A549 (cell line): ENCODE measurements at regions of chr12 and their contacts with region 1.

Region 1: DNA sequence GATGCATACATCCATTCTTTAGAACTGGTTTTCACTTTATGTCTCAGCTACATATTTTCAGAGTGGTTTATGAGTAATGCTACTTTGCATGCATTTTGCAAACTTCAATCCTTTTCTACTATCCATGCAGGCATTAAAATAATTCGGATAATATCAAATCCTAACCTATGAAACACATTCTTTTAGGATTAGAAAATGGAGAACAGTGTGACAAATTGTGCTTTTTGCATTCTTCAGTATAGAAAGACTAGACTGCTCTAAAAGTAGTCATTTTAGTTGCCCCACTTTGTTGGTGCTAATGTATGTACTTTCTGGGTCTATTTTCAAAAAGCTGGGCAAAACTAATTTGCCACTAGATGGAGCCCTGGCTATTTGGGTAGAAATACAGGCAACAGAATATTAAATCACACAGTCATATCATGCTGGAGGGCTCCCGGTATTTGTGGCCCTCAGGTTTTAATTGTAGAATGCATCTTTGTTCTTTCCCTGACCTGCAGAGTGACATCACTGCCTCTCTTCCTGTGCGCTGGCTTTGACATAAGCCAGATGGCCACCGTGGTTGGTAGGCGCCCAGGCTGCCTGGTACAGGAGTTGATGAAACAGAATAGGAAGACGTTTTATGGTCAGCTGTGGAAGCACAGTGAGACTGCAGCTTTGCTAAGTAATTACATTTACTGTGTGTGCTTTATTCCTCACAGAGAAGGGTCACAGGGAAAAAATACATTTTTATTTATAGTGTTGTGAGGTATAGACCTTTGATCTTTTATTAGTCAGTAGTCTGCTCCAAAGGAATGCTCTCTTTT is 28.1 kb downstream of the MSRB3 start:
- DNase-seq: peak; percentile 25 to 49
- ATAC-seq: peak; percentile 75 to 80; a peak in 5 of 6 replicates
- H3K4me3 ChIP-seq: no peak overlapping the region
- H3K27ac ChIP-seq: no peak overlapping the region
- H3K4me1 ChIP-seq: peaks cover 7% of the 10 kb centered on the region
- CTCF ChIP-seq: peak; percentile 84
- EP300 ChIP-seq: no peak
- POLR2A ChIP-seq: no peak
- RAD21 ChIP-seq: peak; percentile 77 to 83

Region 2: GRCh38 chr12:65327207-65328076 is 20.9 kb after region 1 on chr12:
- CTCF ChIA-PET with region 1: interaction called, 13 read pairs
- POLR2A ChIA-PET with region 1: no interaction called
- DNase-seq: no peak
- ATAC-seq: no peak
- H3K4me3 ChIP-seq: no peak overlapping the region
- H3K27ac ChIP-seq: no peak overlapping the region
- H3K4me1 ChIP-seq: no peaks in the 10 kb centered on the region
- CTCF ChIP-seq: no peak
- EP300 ChIP-seq: no peak
- POLR2A ChIP-seq: no peak
- RAD21 ChIP-seq: no peak

Region 3: GRCh38 chr12:66087365-66087943 is 780.9 kb after region 1 on chr12:
- CTCF ChIA-PET with region 1: interaction called, 13 read pairs
- POLR2A ChIA-PET with region 1: no interaction called
- DNase-seq: peak; percentile 45 to 69
- ATAC-seq: peak; percentile 83 to 91; a peak in 5 of 6 replicates
- H3K4me3 ChIP-seq: no peak overlapping the region
- H3K27ac ChIP-seq: no peak overlapping the region
- H3K4me1 ChIP-seq: 0 out of 3 replicates have a peak, but pooled peaks cover 3% of the 10 kb centered on the region
- CTCF ChIP-seq: peak; percentile 86
- EP300 ChIP-seq: no peak
- POLR2A ChIP-seq: no peak
- RAD21 ChIP-seq: peak; percentile 88 to 92

Region 4: GRCh38 chr12:66107451-66107915 is 800.9 kb after region 1 on chr12:
- CTCF ChIA-PET with region 1: interaction called, 13 read pairs
- POLR2A ChIA-PET with region 1: no interaction called
- DNase-seq: peak; percentile 69 to 92
- ATAC-seq: peak; percentile 91 to 97
- H3K4me3 ChIP-seq: no peak overlapping the region
- H3K27ac ChIP-seq: 0 out of 6 replicates have a peak overlapping the region, but pooled peaks of 1 of the 2 experiments have one; percentile 16
- H3K4me1 ChIP-seq: no peaks in the 10 kb centered on the region
- CTCF ChIP-seq: peak; percentile 75
- EP300 ChIP-seq: no peak
- POLR2A ChIP-seq: no peak
- RAD21 ChIP-seq: peak; percentile 77 to 82